ENCODE measurements at regions of chr5 and their contacts with region 1.

Region 1: DNA sequence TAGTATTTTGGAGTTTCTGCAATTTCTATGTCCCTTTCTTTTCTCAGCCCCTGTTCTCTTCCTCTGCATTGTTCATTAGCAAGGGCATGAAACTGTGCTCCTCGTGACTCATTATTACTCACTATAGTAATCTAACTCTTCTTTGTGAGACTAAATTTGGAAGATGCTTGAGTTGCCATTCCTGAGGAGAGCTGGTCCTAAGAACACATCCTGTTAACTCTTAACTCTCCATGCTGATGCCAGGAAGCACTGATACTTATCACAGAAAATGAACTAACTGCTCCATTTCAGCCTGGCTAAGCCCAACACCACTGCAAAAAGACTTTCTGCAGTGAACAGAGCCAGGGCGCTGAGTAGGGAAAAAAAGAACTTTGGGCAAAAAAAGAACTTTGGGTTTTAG is 10.6 kb upstream of the CSNK1A1 start:
- DNase-seq: no peak
- H3K4me3 Mint-ChIP-seq: no peak overlapping the region
- H3K27ac Mint-ChIP-seq: no peak overlapping the region
- H3K4me1 Mint-ChIP-seq: peaks cover 30% of the 10 kb centered on the region
- H3K27me3 Mint-ChIP-seq: no peaks in the 10 kb centered on the region

Region 2: GRCh38 chr5:149257965-149258705 is 303.7 kb before region 1 on chr5:
- CTCF ChIA-PET with region 1: no interaction called
- DNase-seq: no peak
- H3K4me3 Mint-ChIP-seq: no peak overlapping the region
- H3K27ac Mint-ChIP-seq: no peak overlapping the region
- H3K4me1 Mint-ChIP-seq: no peaks in the 10 kb centered on the region
- H3K27me3 Mint-ChIP-seq: peaks cover 39% of the 10 kb centered on the region

Region 3: GRCh38 chr5:149381987-149382340 is 179.9 kb before region 1 on chr5:
- CTCF ChIA-PET with region 1: interaction called, 60 read pairs
- DNase-seq: peak; percentile 83
- H3K4me3 Mint-ChIP-seq: no peak overlapping the region
- H3K27ac Mint-ChIP-seq: no peak overlapping the region
- H3K4me1 Mint-ChIP-seq: no peaks in the 10 kb centered on the region
- H3K27me3 Mint-ChIP-seq: peaks cover 11% of the 10 kb centered on the region

Region 4: DNA sequence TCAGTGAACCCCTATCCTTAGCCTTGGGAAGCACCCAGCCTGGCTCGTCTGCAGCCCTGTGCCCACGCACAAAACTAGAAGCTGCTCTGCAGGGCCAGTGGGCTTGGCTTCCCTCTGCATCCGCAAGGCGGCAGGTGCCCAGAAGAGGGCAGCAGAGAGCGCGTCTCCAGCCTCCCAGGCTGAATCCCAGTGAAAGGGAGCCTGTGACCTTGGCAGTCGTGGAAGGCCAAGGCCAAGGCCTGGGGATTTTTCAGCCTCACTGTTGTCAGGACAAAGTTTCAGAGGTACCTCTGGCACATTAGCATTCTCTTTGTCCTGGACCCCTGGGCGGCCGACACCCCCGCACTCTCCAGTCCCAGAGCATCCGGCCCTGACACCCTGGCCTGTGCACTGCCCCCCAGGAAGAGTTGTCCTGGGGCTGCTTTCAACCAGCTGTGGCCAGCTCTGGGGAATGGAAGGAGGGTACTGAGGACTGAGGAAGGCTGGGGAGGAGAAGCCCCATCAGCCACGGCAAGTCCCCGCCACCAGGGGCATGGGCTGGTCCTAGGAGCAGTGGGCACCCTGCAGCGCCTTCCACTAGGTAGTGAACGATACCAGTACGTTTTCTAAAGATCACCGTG is 119.2 kb before region 1 on chr5:
- CTCF ChIA-PET with region 1: interaction called, 41 read pairs
- DNase-seq: peak; percentile 78
- H3K4me3 Mint-ChIP-seq: no peak overlapping the region
- H3K27ac Mint-ChIP-seq: no peak overlapping the region
- H3K4me1 Mint-ChIP-seq: peaks cover 21% of the 10 kb centered on the region
- H3K27me3 Mint-ChIP-seq: peaks cover 12% of the 10 kb centered on the region

Region 5: GRCh38 chr5:149576021-149576420 is 14.2 kb after region 1 on chr5:
- CTCF ChIA-PET with region 1: interaction called, 10 read pairs
- DNase-seq: peak; percentile 34
- H3K4me3 Mint-ChIP-seq: no peak overlapping the region
- H3K27ac Mint-ChIP-seq: peak overlapping the region; percentile 93
- H3K4me1 Mint-ChIP-seq: peaks cover 28% of the 10 kb centered on the region
- H3K27me3 Mint-ChIP-seq: peaks cover 3% of the 10 kb centered on the region